ENCODE measurements at regions of chr2 and their contacts with region 1.

Region 1: GRCh38 chr2:88857951-88858411 is 166.5 kb downstream of the RPIA start:
- DNase-seq: peak; percentile 75
- ATAC-seq: peak; percentile 37
- H3K4me3 ChIP-seq: peak overlapping the region; percentile 62 to 95 (median 86)
- H3K4me3 Mint-ChIP-seq: peak overlapping the region; percentile 93
- H3K27ac ChIP-seq: peak overlapping the region; percentile 90 to 98
- H3K27ac Mint-ChIP-seq: peak overlapping the region; percentile 92
- H3K4me1 ChIP-seq: peaks cover 38 to 43% of the 10 kb centered on the region in 2 donors
- H3K4me1 Mint-ChIP-seq: peaks cover 54% of the 10 kb centered on the region
- H3K27me3 ChIP-seq: no peaks in the 10 kb centered on the region
- H3K27me3 Mint-ChIP-seq: no peaks in the 10 kb centered on the region
- CTCF ChIP-seq: no peak

Region 2: DNA sequence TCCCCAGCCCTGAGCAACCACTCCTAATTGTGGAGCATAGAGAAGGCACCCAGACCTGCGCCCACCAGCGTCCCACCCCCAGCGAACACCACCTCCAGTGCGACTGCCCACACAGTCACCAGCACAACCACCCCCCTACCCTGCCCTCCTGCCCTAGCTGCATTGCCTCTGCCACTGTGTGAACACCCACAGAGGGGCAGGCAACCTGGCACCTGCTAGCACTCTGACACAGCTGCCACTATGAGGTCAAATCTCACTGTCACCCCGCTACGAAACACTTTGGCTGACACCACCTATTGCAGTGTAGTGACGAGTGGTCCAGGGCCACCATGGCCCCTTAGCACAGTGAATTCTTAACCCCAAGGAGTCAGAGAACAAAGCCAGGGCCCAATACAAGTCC is 216.7 kb before region 1 on chr2:
- CTCF ChIA-PET with region 1: no interaction called
- POLR2A ChIA-PET with region 1: no interaction called
- intact Hi-C with region 1: no loop called
- DNase-seq: no peak
- ATAC-seq: no peak
- H3K4me3 ChIP-seq: no peak overlapping the region
- H3K4me3 Mint-ChIP-seq: no peak overlapping the region
- H3K27ac ChIP-seq: no peak overlapping the region
- H3K27ac Mint-ChIP-seq: no peak overlapping the region
- H3K4me1 ChIP-seq: no peaks in the 10 kb centered on the region
- H3K4me1 Mint-ChIP-seq: no peaks in the 10 kb centered on the region
- H3K27me3 ChIP-seq: peaks cover 0 to 6% (median 4%) of the 10 kb centered on the region in 4 experiments
- H3K27me3 Mint-ChIP-seq: peaks cover 4% of the 10 kb centered on the region
- CTCF ChIP-seq: no peak

Region 3: GRCh38 chr2:88813612-88814011 is 44.4 kb before region 1 on chr2:
- CTCF ChIA-PET with region 1: no interaction called
- POLR2A ChIA-PET with region 1: no interaction called
- intact Hi-C with region 1: no loop called
- DNase-seq: no peak
- ATAC-seq: no peak
- H3K4me3 ChIP-seq: no peak overlapping the region
- H3K4me3 Mint-ChIP-seq: no peak overlapping the region
- H3K27ac ChIP-seq: no peak overlapping the region
- H3K27ac Mint-ChIP-seq: no peak overlapping the region
- H3K4me1 ChIP-seq: no peaks in the 10 kb centered on the region
- H3K4me1 Mint-ChIP-seq: no peaks in the 10 kb centered on the region
- H3K27me3 ChIP-seq: peaks cover 0 to 4% (median 0%) of the 10 kb centered on the region in 4 experiments
- H3K27me3 Mint-ChIP-seq: no peaks in the 10 kb centered on the region
- CTCF ChIP-seq: no peak

Region 4: DNA sequence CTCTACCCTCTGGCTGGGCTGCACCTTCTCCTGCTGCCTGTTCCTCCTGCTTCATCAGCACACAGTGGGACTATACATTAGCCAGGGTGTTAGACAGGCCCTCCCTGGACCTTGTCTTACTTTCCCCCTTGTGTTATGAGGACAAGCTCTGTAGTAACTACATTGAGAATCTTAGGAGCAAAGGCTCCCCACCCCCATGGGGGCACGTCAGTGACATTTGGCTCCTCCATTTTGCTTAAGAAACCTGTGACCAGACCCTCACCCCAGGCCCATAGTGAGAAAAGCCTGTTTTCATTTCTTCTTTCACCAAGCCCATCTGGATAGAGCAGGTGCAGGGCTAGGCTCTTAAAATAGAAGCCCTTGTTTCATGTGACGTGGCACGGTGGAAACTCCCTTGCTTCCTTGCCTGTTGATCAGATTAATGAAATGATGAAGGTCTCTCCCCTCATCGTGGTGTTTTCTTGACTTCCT is 19.8 kb before region 1 on chr2:
- CTCF ChIA-PET with region 1: interaction called, 577 read pairs
- POLR2A ChIA-PET with region 1: interaction called, 509 read pairs
- intact Hi-C with region 1: loop called (anchors 1 kb)
- DNase-seq: peak; percentile 91
- ATAC-seq: peak; percentile 85
- H3K4me3 ChIP-seq: peak overlapping the region in 2 of 5 experiments; percentile 7 to 45
- H3K4me3 Mint-ChIP-seq: peak overlapping the region; percentile 74
- H3K27ac ChIP-seq: peak overlapping the region; percentile 98 to 100
- H3K27ac Mint-ChIP-seq: peak overlapping the region; percentile 96
- H3K4me1 ChIP-seq: peaks cover 80 to 87% of the 10 kb centered on the region in 2 donors
- H3K4me1 Mint-ChIP-seq: peaks cover 81% of the 10 kb centered on the region
- H3K27me3 ChIP-seq: no peaks in the 10 kb centered on the region
- H3K27me3 Mint-ChIP-seq: no peaks in the 10 kb centered on the region
- CTCF ChIP-seq: no peak

Region 5: GRCh38 chr2:88845772-88846661 is 12.0 kb before region 1 on chr2:
- CTCF ChIA-PET with region 1: interaction called, 577 read pairs
- POLR2A ChIA-PET with region 1: interaction called, 509 read pairs
- intact Hi-C with region 1: loop called (anchors 1 kb)
- DNase-seq: peak; percentile 89
- ATAC-seq: peak; percentile 89
- H3K4me3 ChIP-seq: peak overlapping the region in 1 of 5 experiments; percentile 29
- H3K4me3 Mint-ChIP-seq: peak overlapping the region; percentile 76
- H3K27ac ChIP-seq: peak overlapping the region; percentile 98 to 100
- H3K27ac Mint-ChIP-seq: peak overlapping the region; percentile 96
- H3K4me1 ChIP-seq: peaks cover 96 to 99% of the 10 kb centered on the region in 2 donors
- H3K4me1 Mint-ChIP-seq: peaks cover 93% of the 10 kb centered on the region
- H3K27me3 ChIP-seq: no peaks in the 10 kb centered on the region
- H3K27me3 Mint-ChIP-seq: no peaks in the 10 kb centered on the region
- CTCF ChIP-seq: no peak

Region 6: GRCh38 chr2:88885679-88886416 is 27.9 kb after region 1 on chr2:
- CTCF ChIA-PET with region 1: interaction called, 30 read pairs
- POLR2A ChIA-PET with region 1: interaction called, 22 read pairs
- intact Hi-C with region 1: loop called (anchors 1 kb)
- DNase-seq: no peak
- ATAC-seq: peak; percentile 59
- H3K4me3 ChIP-seq: peak overlapping the region in 4 of 5 experiments; percentile 28 to 54 (median 41)
- H3K4me3 Mint-ChIP-seq: peak overlapping the region; percentile 76
- H3K27ac ChIP-seq: peak overlapping the region; percentile 53 to 65
- H3K27ac Mint-ChIP-seq: peak overlapping the region; percentile 86
- H3K4me1 ChIP-seq: peaks cover 27 to 41% of the 10 kb centered on the region in 2 donors
- H3K4me1 Mint-ChIP-seq: peaks cover 53% of the 10 kb centered on the region
- H3K27me3 ChIP-seq: no peaks in the 10 kb centered on the region
- H3K27me3 Mint-ChIP-seq: no peaks in the 10 kb centered on the region
- CTCF ChIP-seq: no peak

Region 7: GRCh38 chr2:88897715-88898114 is 39.7 kb after region 1 on chr2:
- CTCF ChIA-PET with region 1: interaction called, 8 read pairs
- POLR2A ChIA-PET with region 1: no interaction called
- intact Hi-C with region 1: loop called (anchors 1 kb)
- DNase-seq: peak; percentile 46
- ATAC-seq: peak; percentile 77
- H3K4me3 ChIP-seq: no peak overlapping the region
- H3K4me3 Mint-ChIP-seq: peak overlapping the region; percentile 62
- H3K27ac ChIP-seq: no peak overlapping the region
- H3K27ac Mint-ChIP-seq: peak overlapping the region; percentile 75
- H3K4me1 ChIP-seq: peaks cover 14 to 17% of the 10 kb centered on the region in 2 donors
- H3K4me1 Mint-ChIP-seq: peaks cover 18% of the 10 kb centered on the region
- H3K27me3 ChIP-seq: no peaks in the 10 kb centered on the region
- H3K27me3 Mint-ChIP-seq: no peaks in the 10 kb centered on the region
- CTCF ChIP-seq: peak; percentile 9

Measured in B cell (primary cell).